MCF 10A (cell line): ENCODE measurements at regions of chr7 and their contacts with region 1.

Region 1: GRCh38 chr7:41705109-41705901 is 2.4 kb upstream of the INHBA start:
- DNase-seq: peak; percentile 84
- H3K4me3 Mint-ChIP-seq: peak overlapping the region; percentile 80
- H3K27ac Mint-ChIP-seq: peak overlapping the region; percentile 71
- H3K4me1 Mint-ChIP-seq: peaks cover 34% of the 10 kb centered on the region
- H3K27me3 Mint-ChIP-seq: no peaks in the 10 kb centered on the region
- CTCF ChIP-seq: peak; percentile 92

Region 2: DNA sequence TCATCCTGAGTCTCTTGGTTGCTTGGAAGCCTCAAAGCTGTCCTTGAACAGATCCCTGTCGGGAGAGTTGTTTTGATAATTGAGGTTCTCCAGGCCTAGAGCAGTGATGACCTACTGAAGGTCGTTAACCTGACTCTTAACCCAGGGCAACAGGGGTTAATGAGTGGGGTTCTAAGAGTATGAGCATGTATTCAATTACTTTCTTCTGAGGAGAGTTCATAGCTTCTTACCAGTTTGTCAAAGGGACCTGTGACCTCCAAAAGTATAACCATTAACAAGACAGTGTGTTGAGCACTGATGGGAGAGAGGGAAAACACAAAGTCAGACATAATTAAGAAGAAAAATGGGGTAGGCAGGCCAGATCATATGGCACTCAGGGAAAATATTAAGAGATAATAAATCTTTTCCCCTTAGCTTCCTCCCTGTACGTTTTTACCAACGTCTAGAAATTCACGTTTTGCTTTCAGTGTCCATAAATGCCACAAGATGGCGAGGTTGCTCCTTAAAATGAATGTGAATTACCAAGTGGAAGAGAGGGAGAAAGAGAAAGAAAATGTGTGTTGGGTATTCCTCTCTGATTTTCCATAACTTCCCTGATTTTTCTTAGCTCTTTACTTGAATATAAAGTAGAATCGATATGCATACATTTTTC is 1472.9 kb before region 1 on chr7:
- CTCF ChIA-PET with region 1: interaction called, 60 read pairs
- POLR2A ChIA-PET with region 1: interaction called, 8 read pairs
- intact Hi-C with region 1: loop called (anchors 1 kb)
- DNase-seq: peak; percentile 69
- H3K4me3 Mint-ChIP-seq: no peak overlapping the region
- H3K27ac Mint-ChIP-seq: peak overlapping the region; percentile 50
- H3K4me1 Mint-ChIP-seq: peaks cover 10% of the 10 kb centered on the region
- H3K27me3 Mint-ChIP-seq: no peaks in the 10 kb centered on the region
- CTCF ChIP-seq: peak; percentile 65

Region 3: DNA sequence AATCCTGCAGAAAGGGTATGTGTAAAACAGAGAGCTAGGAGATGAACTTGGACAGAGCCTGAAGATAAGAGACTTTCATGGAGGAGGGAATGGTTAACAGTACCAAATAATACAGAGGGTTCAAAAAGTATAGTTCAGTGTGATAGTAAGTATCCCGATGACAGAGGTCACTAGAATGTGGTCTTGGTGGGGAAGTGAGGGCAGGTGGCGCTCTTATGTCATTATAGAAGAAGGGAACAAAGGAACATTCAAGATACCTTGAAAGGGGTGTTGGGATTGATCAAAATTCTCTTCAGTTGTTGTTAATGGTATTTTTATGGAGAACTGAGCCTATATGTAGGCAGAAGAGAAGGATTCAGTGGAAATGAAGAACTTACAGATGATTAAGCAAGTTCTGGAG is 1258.0 kb before region 1 on chr7:
- CTCF ChIA-PET with region 1: interaction called, 3 read pairs
- POLR2A ChIA-PET with region 1: no interaction called
- intact Hi-C with region 1: loop called (anchors 5 kb)
- DNase-seq: no peak
- H3K4me3 Mint-ChIP-seq: no peak overlapping the region
- H3K27ac Mint-ChIP-seq: no peak overlapping the region
- H3K4me1 Mint-ChIP-seq: no peaks in the 10 kb centered on the region
- H3K27me3 Mint-ChIP-seq: no peaks in the 10 kb centered on the region
- CTCF ChIP-seq: peak; percentile 7

Region 4: GRCh38 chr7:40833888-40834234 is 871.4 kb before region 1 on chr7:
- CTCF ChIA-PET with region 1: interaction called, 6 read pairs
- POLR2A ChIA-PET with region 1: no interaction called
- intact Hi-C with region 1: loop called (anchors 2 kb)
- DNase-seq: no peak
- H3K4me3 Mint-ChIP-seq: no peak overlapping the region
- H3K27ac Mint-ChIP-seq: no peak overlapping the region
- H3K4me1 Mint-ChIP-seq: peaks cover 17% of the 10 kb centered on the region
- H3K27me3 Mint-ChIP-seq: no peaks in the 10 kb centered on the region
- CTCF ChIP-seq: peak; percentile 31

Region 5: DNA sequence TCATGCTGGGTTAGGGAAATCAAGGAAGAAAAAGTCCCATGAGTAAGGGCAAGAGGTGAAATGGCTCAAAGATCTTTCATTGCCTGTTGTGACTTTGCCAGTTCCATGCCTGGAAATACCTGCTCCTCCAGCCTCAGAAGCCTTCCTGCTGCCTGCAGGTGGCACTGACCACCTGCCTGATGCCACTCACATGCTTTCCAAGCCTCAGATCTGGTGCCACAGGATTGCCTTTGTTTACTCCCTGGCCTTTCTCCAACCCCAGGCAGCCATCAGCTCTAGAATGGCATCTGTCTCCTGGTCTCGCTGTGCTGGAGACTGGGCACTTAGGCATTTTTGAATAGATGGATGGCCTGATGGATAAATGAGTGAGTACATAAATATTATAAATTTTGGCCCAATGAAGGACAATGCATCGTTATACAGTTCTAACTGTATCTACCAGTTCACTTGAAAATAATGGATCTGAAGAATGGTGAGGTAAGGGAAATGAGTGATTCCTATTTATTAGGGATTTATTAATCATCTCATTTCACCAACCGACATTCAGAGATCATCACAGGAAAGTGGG is 659.7 kb before region 1 on chr7:
- CTCF ChIA-PET with region 1: interaction called, 12 read pairs
- POLR2A ChIA-PET with region 1: no interaction called
- intact Hi-C with region 1: loop called (anchors 1 kb)
- DNase-seq: peak; percentile 74
- H3K4me3 Mint-ChIP-seq: no peak overlapping the region
- H3K27ac Mint-ChIP-seq: no peak overlapping the region
- H3K4me1 Mint-ChIP-seq: peaks cover 21% of the 10 kb centered on the region
- H3K27me3 Mint-ChIP-seq: no peaks in the 10 kb centered on the region
- CTCF ChIP-seq: peak; percentile 38

Region 6: DNA sequence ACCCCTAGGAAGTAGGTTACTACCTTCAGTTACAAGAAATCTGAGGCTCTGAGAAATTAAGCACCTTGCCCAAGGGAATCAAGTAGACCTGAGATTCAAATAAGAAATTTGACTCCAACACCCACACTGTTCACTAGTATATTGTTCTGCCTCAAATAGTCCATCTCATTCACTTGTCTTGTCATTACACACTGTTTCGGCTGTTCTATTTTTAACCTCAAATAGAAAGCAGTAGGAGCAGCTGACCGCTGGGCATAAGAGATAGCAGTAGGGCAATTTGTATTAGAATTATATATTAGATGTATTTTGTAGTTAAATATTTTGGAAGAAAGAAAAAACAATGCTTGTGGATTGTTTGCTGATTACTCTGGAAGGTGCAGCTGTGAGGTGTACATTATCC is 187.5 kb before region 1 on chr7:
- CTCF ChIA-PET with region 1: no interaction called
- POLR2A ChIA-PET with region 1: no interaction called
- intact Hi-C with region 1: no loop called
- DNase-seq: no peak
- H3K4me3 Mint-ChIP-seq: no peak overlapping the region
- H3K27ac Mint-ChIP-seq: no peak overlapping the region
- H3K4me1 Mint-ChIP-seq: no peaks in the 10 kb centered on the region
- H3K27me3 Mint-ChIP-seq: no peaks in the 10 kb centered on the region
- CTCF ChIP-seq: no peak

Region 7: DNA sequence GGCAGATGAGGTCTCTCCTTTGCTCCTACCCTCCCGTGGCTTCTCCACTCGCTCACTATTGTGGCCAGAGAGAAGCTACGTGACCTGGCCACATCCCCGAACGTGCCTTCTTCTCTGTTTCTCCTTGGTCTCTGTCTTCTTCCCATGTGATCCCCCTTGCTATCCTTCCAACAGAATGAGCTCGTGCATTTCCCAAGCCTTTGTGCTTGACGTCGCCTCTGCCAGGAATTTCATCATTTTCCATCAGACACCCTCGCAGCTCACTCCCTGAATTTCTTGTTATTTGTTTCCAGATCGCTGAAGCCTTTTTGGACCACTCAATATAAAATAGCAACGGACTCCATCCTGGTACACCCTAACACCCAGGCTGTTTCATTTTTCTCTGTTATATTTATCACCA is 11.4 kb after region 1 on chr7:
- CTCF ChIA-PET with region 1: interaction called, 18 read pairs
- POLR2A ChIA-PET with region 1: interaction called, 3 read pairs
- intact Hi-C with region 1: no loop called
- DNase-seq: no peak
- H3K4me3 Mint-ChIP-seq: no peak overlapping the region
- H3K27ac Mint-ChIP-seq: no peak overlapping the region
- H3K4me1 Mint-ChIP-seq: no peaks in the 10 kb centered on the region
- H3K27me3 Mint-ChIP-seq: no peaks in the 10 kb centered on the region
- CTCF ChIP-seq: no peak

Region 8: GRCh38 chr7:42315631-42316030 is 610.3 kb after region 1 on chr7:
- CTCF ChIA-PET with region 1: no interaction called
- POLR2A ChIA-PET with region 1: no interaction called
- intact Hi-C with region 1: no loop called
- DNase-seq: peak; percentile 34
- H3K4me3 Mint-ChIP-seq: no peak overlapping the region
- H3K27ac Mint-ChIP-seq: peak overlapping the region; percentile 36
- H3K4me1 Mint-ChIP-seq: peaks cover 18% of the 10 kb centered on the region
- H3K27me3 Mint-ChIP-seq: no peaks in the 10 kb centered on the region
- CTCF ChIP-seq: no peak